ENCODE measurements at regions of chr11 and their contacts with region 1.

Region 1: DNA sequence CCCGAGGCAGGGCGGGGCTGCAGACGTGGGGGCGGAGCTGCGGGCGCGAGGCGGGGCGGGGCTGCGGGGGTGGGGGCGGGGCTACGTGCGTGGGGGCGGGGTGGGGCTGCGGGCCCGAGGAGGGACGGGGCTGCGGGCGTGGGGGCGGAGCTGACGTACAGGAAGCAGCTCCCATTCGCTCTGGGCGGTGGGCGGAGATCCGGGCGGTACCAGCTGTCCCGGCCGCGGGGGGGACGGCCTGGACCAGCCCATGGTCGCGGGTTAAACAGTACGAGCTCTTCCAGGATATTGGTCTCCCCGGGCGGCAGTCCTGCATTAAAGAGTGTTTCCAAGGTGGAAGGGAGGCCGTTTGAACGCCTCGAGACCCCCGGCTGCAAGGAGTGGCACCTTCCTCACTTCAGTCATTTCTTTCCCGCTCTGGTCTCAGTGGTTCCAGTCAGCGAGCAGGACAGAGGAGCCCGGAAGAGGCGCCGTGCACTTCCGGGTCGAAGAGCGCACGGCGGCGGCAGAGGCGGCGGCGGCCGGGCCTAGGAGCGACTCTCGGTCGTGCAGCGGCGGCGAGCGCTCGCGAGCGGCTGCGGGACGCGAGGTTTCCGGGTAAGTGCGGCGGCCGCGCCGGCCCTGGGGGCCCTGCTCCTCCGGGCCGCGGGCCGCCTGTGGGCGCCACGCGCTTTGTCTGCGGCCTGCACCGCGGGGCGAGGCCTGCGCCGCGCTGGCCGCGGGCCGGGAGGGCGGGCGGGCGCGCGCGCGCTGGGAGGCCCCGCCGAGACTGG is at the start of gene PHRF1:
- DNase-seq: peak; percentile 98
- ATAC-seq: peak; percentile 89
- H3K4me3 Mint-ChIP-seq: peak within 1 kb of the TSS; percentile 86
- H3K27ac Mint-ChIP-seq: peak within 1 kb of the TSS; percentile 98
- H3K4me1 Mint-ChIP-seq: peaks cover 49% of the 10 kb centered on the region
- H3K27me3 Mint-ChIP-seq: peaks cover 10% of the 10 kb centered on the region
- total RNA-seq, gene PHRF1: 40.0 to 44.5 TPM

Region 2: DNA sequence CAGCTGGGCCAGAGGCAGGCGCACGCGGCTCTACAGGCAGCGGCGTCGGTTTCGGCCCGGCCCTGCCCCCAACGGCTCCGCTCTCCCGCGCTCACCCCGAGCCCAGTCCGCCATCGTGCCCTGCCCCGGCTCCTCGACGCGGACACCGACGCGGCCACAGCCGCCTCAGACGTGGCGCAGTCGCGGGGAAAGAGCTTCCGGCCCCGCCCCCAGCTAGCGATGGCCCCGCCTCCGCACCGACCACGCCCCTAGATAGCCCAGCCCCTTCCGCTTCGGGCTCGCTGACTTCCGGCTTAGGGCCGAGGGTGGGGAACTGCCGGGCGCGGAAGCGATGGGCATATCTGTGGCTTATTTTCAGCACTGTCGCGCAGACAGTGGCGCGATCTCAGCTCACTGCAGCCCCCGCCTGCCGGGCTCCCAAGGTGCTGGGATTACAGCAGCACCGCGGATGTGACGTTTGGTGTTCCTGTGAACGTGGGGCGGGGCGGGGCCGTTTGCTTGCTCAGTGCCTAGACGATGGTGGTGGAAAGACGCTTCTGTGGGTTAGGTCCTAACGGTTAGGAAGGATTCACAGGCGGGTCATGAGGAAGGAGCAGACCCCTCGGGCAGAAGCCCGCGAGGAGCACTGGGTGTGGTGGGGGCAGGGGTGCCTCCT is 368.8 kb before region 1 on chr11 and contains the starts of genes BET1L and RIC8A:
- CTCF ChIA-PET with region 1: no interaction called
- POLR2A ChIA-PET with region 1: no interaction called
- intact Hi-C with region 1: loop called in 1 of 2 experiments (anchors 1 kb)
- DNase-seq: peak; percentile 99
- ATAC-seq: peak; percentile 89
- H3K4me3 Mint-ChIP-seq: peak within 1 kb of the TSS; percentile 94
- H3K27ac Mint-ChIP-seq: peak within 1 kb of the TSS; percentile 99
- H3K4me1 Mint-ChIP-seq: peaks cover 56% of the 10 kb centered on the region
- H3K27me3 Mint-ChIP-seq: no peaks in the 10 kb centered on the region
- total RNA-seq, gene BET1L: 45.5 to 49.4 TPM
- total RNA-seq, gene RIC8A: 104 to 124 TPM

Region 3: GRCh38 chr11:406978-407739 is 169.0 kb before region 1 on chr11:
- CTCF ChIA-PET with region 1: no interaction called
- POLR2A ChIA-PET with region 1: no interaction called
- intact Hi-C with region 1: loop called in 1 of 2 experiments (anchors 1 kb)
- DNase-seq: peak; percentile 93
- ATAC-seq: peak; percentile 90
- H3K4me3 Mint-ChIP-seq: no peak overlapping the region
- H3K27ac Mint-ChIP-seq: no peak overlapping the region
- H3K4me1 Mint-ChIP-seq: peaks cover 5% of the 10 kb centered on the region
- H3K27me3 Mint-ChIP-seq: no peaks in the 10 kb centered on the region

Region 4: DNA sequence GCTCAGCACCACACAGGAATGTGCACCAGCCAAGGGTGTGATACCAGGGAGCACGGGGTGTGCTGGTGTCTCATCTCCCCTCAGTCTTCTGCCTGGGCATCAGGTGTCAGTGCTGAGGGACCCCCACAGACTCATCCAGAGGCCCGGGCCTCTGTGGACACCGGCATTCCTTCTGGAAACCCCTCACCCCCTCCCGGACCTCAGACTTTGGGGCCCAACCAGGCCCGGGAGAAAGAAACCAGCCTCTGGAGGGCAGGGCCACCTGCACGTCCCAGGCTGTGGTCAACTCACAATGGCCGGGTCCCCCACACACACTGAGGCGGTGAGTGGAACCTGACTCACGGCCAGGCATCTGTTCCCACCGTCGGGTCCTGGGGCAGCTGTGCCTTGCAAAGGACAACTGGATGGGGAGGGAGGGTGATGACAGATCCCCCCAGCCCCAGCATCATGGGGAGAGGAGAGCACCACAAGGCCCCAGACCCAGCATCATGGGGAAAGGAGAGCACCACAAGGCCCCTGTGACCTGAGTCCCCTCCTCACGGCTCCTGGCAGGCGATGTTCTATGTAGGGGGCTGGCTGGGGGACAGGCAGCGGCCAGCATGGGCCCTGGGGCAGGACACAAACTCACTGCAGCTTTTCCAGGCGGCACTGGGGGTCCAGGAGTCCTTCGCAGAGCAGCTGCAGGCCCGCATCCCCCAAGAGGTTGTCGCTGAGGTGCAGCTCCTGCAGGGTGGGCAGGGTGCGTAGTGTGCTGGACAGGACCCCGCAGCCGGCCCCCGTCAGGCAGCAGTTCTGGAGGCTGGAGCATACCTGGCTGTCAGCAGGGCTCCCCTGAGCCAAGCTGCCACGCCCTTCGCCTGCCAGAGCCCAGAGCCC is 76.7 kb before region 1 on chr11:
- CTCF ChIA-PET with region 1: no interaction called
- POLR2A ChIA-PET with region 1: no interaction called
- intact Hi-C with region 1: no loop called
- DNase-seq: no peak
- ATAC-seq: no peak
- H3K4me3 Mint-ChIP-seq: no peak overlapping the region
- H3K27ac Mint-ChIP-seq: no peak overlapping the region
- H3K4me1 Mint-ChIP-seq: peaks cover 8% of the 10 kb centered on the region
- H3K27me3 Mint-ChIP-seq: no peaks in the 10 kb centered on the region

Region 5: GRCh38 chr11:560305-561147 is 15.7 kb before region 1 on chr11 and contains the starts of genes LMNTD2 and RASSF7:
- CTCF ChIA-PET with region 1: interaction called, 6 read pairs
- POLR2A ChIA-PET with region 1: interaction called, 4 read pairs
- intact Hi-C with region 1: loop called (anchors 1 to 2 kb)
- DNase-seq: peak; percentile 97
- ATAC-seq: peak; percentile 93
- H3K4me3 Mint-ChIP-seq: peak within 1 kb of the TSS; percentile 85
- H3K27ac Mint-ChIP-seq: peak within 1 kb of the TSS; percentile 72
- H3K4me1 Mint-ChIP-seq: peaks cover 8% of the 10 kb centered on the region
- H3K27me3 Mint-ChIP-seq: peaks cover 2% of the 10 kb centered on the region
- total RNA-seq, gene LMNTD2: 2.7 to 4.9 TPM
- total RNA-seq, gene RASSF7: 16.8 TPM

Region 6: DNA sequence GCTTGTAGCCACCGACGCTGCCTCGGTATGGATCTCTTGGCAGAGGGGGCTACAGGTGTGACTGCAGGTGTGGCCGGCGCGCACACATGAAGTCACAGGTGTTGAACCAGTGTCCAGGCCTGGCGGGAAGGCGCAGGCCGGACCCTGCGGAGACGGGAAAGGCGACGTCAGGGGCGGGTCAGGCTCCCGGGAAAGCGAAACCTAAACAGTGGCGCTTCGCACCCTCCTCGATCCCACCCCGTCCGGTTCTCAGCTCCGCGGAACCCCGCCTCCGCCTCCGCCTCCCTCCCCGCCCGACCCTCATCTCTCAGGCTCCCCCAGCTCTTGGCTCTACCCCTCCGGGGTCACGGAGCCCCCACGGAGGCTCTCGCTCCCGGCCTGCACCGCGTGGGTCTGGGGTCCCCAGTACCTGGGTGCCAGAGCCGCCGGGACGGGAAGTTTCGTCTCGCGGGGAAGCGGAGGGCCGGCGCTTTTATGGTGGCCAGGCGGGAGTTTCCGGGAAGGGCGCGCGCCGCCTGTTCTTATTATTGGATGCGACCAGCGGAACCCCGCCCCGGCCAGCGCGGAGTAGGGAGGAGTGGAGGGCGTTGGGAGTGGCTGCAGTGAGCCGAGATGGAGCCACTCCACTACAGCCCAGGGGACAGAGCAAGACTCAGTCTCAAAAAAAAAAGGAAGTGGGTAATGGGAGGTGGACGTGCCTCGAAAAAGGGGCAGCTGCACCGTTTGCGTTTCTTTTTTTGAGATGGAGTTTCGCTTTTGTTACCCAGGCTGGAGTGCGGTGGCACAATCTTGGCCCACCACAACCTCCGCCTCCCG is 39.5 kb after region 1 on chr11 and contains the start of gene IRF7:
- CTCF ChIA-PET with region 1: interaction called, 4 read pairs
- POLR2A ChIA-PET with region 1: no interaction called
- intact Hi-C with region 1: loop called in 1 of 2 experiments (anchors 1 kb)
- DNase-seq: peak; percentile 93
- ATAC-seq: peak; percentile 81
- H3K4me3 Mint-ChIP-seq: peak within 1 kb of the TSS; percentile 85
- H3K27ac Mint-ChIP-seq: peak within 1 kb of the TSS; percentile 95
- H3K4me1 Mint-ChIP-seq: peaks cover 13% of the 10 kb centered on the region
- H3K27me3 Mint-ChIP-seq: no peaks in the 10 kb centered on the region
- total RNA-seq, gene IRF7: 57.1 to 62.6 TPM

Region 7: DNA sequence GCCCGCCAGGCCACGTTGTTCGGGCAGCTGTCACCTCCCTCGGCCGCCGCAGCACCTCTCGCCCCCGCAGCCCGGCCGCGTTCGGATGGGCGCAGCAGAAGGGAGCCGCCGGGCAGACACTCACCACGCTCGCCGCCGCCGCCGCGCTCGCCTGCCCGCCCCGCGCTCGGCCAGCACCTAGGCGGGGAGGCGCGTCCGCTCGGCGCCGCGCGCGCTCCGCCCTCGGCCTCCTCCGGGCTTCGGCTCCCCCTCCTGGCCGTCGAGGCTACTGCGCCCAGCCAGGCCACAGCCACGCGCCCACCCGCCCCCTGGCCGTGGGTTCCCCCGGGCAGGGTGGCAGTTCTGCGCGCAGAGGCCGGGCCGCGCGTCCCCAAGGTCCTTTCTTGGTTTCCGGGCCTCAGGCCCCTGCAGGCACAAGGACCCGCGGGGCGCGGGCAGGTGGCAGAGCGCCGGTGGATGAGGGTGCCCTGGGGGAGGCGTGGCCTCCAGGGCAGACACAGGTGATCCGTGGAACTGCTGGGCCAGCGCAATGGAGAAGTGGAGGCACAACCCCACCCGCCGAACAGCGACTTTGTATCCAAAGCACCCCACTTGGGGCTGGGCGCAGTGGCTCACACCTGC is 222.0 kb after region 1 on chr11 and contains the start of gene SLC25A22:
- CTCF ChIA-PET with region 1: no interaction called
- POLR2A ChIA-PET with region 1: no interaction called
- intact Hi-C with region 1: loop called (anchors 1 to 10 kb)
- DNase-seq: peak; percentile 92
- ATAC-seq: peak; percentile 63
- H3K4me3 Mint-ChIP-seq: peak within 1 kb of the TSS; percentile 79
- H3K27ac Mint-ChIP-seq: peak within 1 kb of the TSS; percentile 67
- H3K4me1 Mint-ChIP-seq: peaks cover 13% of the 10 kb centered on the region
- H3K27me3 Mint-ChIP-seq: no peaks in the 10 kb centered on the region
- total RNA-seq, gene SLC25A22: 33.9 to 36.6 TPM

Region 8: GRCh38 chr11:842370-843002 is 266.3 kb after region 1 on chr11 and contains the starts of genes POLR2L and TSPAN4:
- CTCF ChIA-PET with region 1: no interaction called
- POLR2A ChIA-PET with region 1: no interaction called
- intact Hi-C with region 1: loop called in 1 of 2 experiments (anchors 1 kb)
- DNase-seq: peak; percentile 94
- ATAC-seq: peak; percentile 80
- H3K4me3 Mint-ChIP-seq: peak within 1 kb of the TSS; percentile 84
- H3K27ac Mint-ChIP-seq: peak within 1 kb of the TSS; percentile 87
- H3K4me1 Mint-ChIP-seq: peaks cover 22% of the 10 kb centered on the region
- H3K27me3 Mint-ChIP-seq: peaks cover 4% of the 10 kb centered on the region
- total RNA-seq, gene POLR2L: 74.6 to 79.4 TPM
- total RNA-seq, gene TSPAN4: 5.2 to 6.0 TPM

Measured in activated CD4-positive, alpha-beta T cell treated with anti-CD3 and anti-CD28 coated beads for 36 hours (primary cell).